ENCODE measurements at regions of chr1 and their contacts with region 1.

Region 1: GRCh38 chr1:89339039-89339438 is 24.8 kb upstream of the GBP6 start:
- DNase-seq: peak in 1 of 2 donors; percentile 23
- H3K4me3 ChIP-seq: no peak overlapping the region
- H3K27ac ChIP-seq: no peak overlapping the region
- H3K4me1 ChIP-seq: no peaks in the 10 kb centered on the region
- H3K27me3 ChIP-seq: no peaks in the 10 kb centered on the region
- CTCF ChIP-seq: no peak
- POLR2A ChIP-seq: no peak

Region 2: DNA sequence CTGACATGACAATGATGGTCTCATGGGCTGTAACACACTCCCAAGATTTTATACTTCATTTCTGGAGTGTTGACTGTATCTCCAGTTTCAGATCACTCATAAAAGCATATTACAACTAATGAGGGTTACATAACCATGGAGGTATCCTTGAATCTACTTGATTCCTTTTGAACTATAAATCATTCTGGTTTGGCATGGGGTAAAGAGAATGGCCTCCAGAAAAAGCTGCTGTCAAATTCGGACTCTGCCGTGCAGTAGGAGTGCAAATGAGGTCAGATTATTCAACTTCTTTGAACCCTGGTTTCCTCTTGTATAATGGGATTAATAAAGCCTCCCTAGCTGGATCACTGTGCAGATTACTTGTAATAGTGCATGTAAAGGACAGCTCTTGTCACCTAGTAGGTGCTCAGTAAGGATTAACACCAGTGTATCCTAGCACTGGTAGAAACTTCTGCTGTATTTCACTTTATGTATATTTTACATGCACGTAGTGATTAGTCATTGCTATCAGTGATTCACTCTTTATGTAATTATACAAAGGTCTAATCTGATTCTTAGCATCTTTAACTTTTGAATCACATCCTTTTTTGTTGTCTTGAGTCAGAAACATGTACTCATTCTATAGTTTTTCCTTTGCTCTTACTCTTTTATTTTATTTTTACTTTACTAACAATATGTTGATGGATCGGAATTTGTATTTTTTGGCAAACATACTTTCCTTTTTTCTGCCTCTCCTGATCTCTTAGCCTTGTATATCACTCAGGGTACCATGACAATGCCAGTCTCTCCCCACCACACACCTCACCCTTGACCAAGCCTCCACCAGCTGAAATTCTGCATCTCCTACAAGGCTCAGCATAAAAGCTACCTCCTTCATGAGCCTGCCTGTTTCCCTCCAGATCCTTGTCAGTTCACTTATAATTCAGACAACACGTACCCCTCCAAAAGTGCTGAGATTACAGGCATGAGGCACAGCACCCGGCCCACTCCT is 297.1 kb after region 1 on chr1:
- intact Hi-C with region 1: loop called (anchors 5 kb)
- DNase-seq: no peak
- H3K4me3 ChIP-seq: no peak overlapping the region
- H3K27ac ChIP-seq: no peak overlapping the region
- H3K4me1 ChIP-seq: peaks cover 0 to 4% of the 10 kb centered on the region in 2 donors
- H3K27me3 ChIP-seq: no peaks in the 10 kb centered on the region
- CTCF ChIP-seq: no peak
- POLR2A ChIP-seq: no peak